ENCODE measurements at regions of chr10 and their contacts with region 1.

Region 1: DNA sequence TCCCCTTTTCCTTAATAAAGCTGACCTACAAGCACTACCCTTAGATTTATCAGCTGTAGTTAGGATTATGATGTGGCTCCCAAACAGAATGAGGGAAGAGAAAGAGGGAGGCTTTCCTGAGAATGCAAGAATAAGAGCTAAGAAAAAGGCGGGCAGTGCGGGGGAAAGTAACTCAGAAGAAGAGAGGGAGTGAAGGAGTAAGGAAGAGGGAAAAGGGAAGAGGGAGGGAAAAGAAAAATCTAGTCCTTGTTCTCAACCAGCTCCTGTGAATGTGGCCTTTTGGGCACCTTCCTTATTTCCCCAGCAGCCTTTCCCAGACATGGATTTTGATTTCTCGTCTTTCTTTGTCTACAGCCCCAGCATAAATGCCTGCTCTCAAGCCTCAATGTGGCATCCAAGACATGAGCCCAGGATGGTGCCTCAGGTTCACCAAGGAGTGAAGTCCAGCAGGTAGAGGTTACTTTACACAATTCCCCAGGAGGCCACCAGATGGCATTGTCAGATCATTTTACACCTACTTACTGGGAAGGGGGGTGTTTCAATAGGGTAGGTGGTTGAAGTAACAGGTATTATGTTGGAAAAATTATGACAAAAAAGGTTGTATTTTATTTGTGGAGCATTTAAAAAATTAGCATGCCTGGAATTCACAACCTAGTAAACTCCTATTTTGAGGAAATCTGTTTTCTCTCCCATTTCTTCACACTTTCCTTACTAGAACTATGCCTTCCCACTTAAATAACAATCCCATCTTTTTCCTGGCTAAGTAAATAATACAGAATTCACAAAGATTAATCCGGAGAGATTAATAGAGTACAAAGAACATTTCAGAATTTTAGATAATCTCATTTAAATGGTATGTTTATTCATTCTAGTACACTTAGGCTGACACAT is 106.5 kb downstream of the HTR7 start:
- DNase-seq: peak in 33 of 42 donors; percentile 18 to 73 (median 42)

Region 2: DNA sequence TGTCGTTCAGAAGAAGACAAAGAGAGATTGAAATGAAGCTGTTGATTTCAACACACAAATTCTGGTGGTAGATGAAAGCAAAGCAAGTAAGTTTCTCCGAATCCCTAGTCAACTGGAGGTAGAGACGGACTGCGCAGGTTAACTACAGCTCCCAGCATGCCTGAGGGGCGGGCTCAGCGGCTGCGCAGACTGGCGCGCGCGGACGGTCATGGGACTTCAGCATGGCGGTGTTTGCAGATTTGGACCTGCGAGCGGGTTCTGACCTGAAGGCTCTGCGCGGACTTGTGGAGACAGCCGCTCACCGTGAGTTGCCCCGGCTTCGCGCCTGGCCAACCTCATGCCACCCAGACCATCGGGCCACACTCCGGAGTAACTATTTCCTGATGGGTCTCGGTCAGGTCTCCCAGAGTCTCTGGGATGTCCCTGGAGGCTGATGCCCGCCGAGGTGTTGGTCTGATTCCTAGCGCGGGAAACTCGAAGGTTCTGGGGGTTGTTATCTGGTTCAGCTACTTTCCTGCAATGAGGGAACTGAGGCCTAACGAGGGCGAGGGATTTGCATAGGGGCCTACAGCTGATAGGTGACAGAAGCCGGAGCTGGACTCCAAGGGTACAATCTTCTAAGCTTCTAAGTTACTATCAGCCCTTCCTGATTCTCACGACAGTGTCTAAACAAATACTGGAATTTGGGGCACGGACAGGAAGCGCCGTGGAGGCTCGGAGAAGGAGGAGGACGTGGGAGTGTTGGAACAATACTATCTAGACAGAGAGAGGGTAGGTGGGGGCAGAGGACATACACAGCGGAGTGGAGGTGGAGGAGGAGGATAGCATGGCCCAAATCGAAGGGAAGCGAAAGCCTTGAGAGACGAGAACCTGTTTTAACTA is 120.7 kb after region 1 on chr10 and contains the start of gene RPP30:
- intact Hi-C with region 1: loop called (anchors 5 kb)
- DNase-seq: peak; percentile 72 to 96 (median 91)

Measured in head of caudate nucleus (tissue), 42 donors.